ENCODE measurements at regions of chr20 and their contacts with region 1.

Region 1: GRCh38 chr20:22833851-22834250 is 201.3 kb upstream of the SSTR4 start:
- DNase-seq: no peak
- ATAC-seq: no peak
- H3K4me3 ChIP-seq: no peak overlapping the region
- H3K27ac ChIP-seq: no peak overlapping the region
- H3K4me1 ChIP-seq: peaks cover 3% of the 10 kb centered on the region
- H3K27me3 ChIP-seq: no peaks in the 10 kb centered on the region

Region 2: DNA sequence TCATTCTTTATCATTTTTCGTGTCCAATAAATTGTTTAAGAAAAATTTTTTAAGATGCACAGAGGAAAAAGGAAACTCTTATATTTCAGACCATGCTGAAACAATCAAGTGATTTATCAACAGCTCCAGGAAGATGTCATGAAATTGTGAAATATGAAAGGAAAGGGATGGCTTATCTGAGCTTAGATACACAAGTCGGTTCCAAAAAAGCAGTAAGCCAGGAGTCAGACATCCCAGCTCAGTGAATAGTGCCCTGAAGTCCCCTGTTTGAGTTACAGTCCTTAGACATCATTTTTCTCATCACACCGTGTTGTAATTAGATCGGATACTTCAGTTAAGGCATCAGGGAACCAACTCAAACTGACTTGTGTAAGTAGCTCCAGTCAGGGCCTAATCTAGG is 110.2 kb after region 1 on chr20:
- intact Hi-C with region 1: loop called in 1 of 4 experiments (anchors 5 kb)
- DNase-seq: no peak
- ATAC-seq: no peak
- H3K4me3 ChIP-seq: no peak overlapping the region
- H3K27ac ChIP-seq: no peak overlapping the region
- H3K4me1 ChIP-seq: no peaks in the 10 kb centered on the region
- H3K27me3 ChIP-seq: no peaks in the 10 kb centered on the region